Activated CD8-positive, alpha-beta T cell treated with anti-CD3 and anti-CD28 coated beads for 36 hours (primary cell): ENCODE measurements at regions of chr20 and their contacts with region 1.

Region 1: GRCh38 chr20:39049684-39050554 is 87.8 kb downstream of the DHX35 start:
- DNase-seq: peak; percentile 74
- ATAC-seq: peak; percentile 86
- H3K4me3 Mint-ChIP-seq: peak overlapping the region; percentile 79
- H3K27ac Mint-ChIP-seq: peak overlapping the region; percentile 68
- H3K4me1 Mint-ChIP-seq: peaks cover 6% of the 10 kb centered on the region
- H3K27me3 Mint-ChIP-seq: no peaks in the 10 kb centered on the region
- CTCF ChIP-seq: peak; percentile 98

Region 2: DNA sequence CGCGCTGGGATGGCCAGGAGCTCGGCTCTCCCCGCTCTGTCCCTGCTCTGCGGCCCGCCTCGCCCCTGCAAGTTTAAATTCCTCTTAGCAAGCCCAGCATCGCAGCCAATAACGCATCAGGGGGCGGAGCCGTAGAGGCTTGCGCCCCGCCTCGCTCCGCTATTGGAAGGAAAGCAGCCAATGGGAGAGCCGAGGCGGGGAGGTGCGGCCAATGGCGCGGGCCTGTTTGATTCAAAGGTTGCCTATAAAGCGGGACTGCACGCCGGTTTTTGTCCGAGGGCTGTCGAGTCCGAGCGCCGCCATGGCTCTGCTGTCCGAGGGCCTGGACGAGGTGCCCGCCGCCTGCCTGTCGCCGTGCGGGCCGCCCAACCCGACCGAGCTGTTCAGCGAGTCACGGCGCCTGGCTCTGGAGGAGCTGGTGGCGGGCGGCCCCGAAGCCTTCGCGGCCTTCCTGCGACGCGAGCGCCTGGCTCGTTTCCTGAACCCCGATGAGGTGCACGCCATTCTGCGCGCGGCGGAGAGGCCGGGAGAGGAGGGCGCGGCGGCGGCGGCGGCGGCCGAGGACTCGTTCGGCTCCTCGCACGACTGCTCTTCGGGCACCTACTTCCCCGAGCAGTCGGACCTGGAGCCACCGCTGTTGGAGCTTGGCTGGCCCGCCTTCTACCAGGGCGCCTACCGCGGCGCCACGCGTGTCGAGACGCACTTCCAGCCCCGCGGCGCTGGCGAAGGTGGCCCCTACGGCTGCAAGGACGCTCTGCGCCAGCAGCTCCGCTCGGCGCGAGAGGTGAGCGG is 123.6 kb before region 1 on chr20 and contains the start of gene FAM83D:
- CTCF ChIA-PET with region 1: interaction called, 73 read pairs
- POLR2A ChIA-PET with region 1: interaction called, 16 read pairs
- intact Hi-C with region 1: loop called (anchors 2 kb)
- DNase-seq: peak; percentile 99
- ATAC-seq: peak; percentile 97
- H3K4me3 Mint-ChIP-seq: peak within 1 kb of the TSS; percentile 82
- H3K27ac Mint-ChIP-seq: peak within 1 kb of the TSS; percentile 52
- H3K4me1 Mint-ChIP-seq: peaks cover 22% of the 10 kb centered on the region
- H3K27me3 Mint-ChIP-seq: no peaks in the 10 kb centered on the region
- CTCF ChIP-seq: no peak
- total RNA-seq, gene FAM83D: 12.6 to 13.8 TPM

Region 3: GRCh38 chr20:38979842-38980241 is 70.1 kb before region 1 on chr20:
- CTCF ChIA-PET with region 1: interaction called, 14 read pairs
- POLR2A ChIA-PET with region 1: no interaction called
- intact Hi-C with region 1: no loop called
- DNase-seq: no peak
- ATAC-seq: no peak
- H3K4me3 Mint-ChIP-seq: no peak overlapping the region
- H3K27ac Mint-ChIP-seq: no peak overlapping the region
- H3K4me1 Mint-ChIP-seq: peaks cover 6% of the 10 kb centered on the region
- H3K27me3 Mint-ChIP-seq: no peaks in the 10 kb centered on the region
- CTCF ChIP-seq: no peak

Region 4: GRCh38 chr20:38997622-38998021 is 52.3 kb before region 1 on chr20:
- CTCF ChIA-PET with region 1: interaction called, 24 read pairs
- POLR2A ChIA-PET with region 1: interaction called, 3 read pairs
- intact Hi-C with region 1: no loop called
- DNase-seq: peak; percentile 96
- ATAC-seq: peak; percentile 94
- H3K4me3 Mint-ChIP-seq: peak overlapping the region; percentile 44
- H3K27ac Mint-ChIP-seq: peak overlapping the region; percentile 77
- H3K4me1 Mint-ChIP-seq: peaks cover 35% of the 10 kb centered on the region
- H3K27me3 Mint-ChIP-seq: no peaks in the 10 kb centered on the region
- CTCF ChIP-seq: peak; percentile 49

Region 5: DNA sequence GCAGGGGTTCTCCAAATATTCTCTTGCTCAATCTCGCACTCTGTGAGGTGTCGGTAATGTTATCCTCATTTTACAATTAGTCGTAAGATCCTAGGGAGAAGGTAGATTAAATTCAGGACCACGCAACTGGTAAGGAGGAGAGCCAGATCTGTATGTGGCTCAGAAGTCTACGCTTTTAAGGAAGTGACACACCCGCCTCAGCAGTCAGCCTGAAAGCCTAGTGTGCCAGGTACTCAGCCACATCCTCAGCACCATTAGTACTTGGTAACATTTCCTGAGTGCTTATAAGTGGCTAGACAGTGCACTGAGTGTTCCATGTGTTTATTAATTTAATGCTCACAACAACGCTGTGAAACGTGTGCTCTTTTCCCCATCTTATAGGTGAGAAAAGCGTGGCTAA is 24.0 kb before region 1 on chr20:
- CTCF ChIA-PET with region 1: interaction called, 16 read pairs
- POLR2A ChIA-PET with region 1: no interaction called
- intact Hi-C with region 1: no loop called
- DNase-seq: peak; percentile 52
- ATAC-seq: peak; percentile 77
- H3K4me3 Mint-ChIP-seq: no peak overlapping the region
- H3K27ac Mint-ChIP-seq: peak overlapping the region; percentile 67
- H3K4me1 Mint-ChIP-seq: peaks cover 23% of the 10 kb centered on the region
- H3K27me3 Mint-ChIP-seq: no peaks in the 10 kb centered on the region
- CTCF ChIP-seq: no peak

Region 6: DNA sequence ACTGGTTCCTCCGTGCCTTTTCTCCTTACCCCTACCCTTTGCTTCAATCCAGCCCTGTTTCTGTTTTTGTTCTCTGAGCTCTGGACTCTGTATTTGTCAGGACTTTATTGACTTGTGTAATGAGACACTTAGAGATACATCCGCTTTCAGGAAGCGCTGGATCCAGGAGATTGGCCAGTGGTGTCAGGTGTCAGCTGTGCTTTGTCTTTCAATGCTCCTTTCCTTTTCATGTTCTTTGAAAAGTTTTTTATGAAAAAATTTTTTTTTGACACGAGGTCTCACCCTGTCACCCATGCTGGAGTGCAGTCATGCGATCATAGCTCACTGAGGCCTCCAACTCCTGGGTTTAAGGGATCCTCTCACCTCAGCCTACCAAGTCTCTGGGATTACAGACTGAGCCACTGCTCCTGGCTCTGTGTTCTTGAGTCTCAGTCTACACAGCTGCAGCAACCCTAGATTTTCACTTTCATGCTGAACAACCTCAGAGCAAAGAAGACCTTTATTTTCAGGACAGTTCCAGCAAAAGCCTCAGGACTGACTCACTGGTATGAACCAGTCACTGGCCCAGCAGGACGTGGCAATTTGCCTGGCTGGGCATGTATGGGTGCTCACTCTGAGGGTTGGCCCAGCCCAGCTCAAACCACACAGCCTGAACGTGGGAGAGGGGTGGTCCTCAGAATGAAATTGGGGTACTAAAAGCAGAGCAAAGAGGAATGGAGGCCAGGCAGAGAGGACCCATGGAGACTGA is 20.7 kb after region 1 on chr20:
- CTCF ChIA-PET with region 1: interaction called, 65 read pairs
- POLR2A ChIA-PET with region 1: no interaction called
- intact Hi-C with region 1: no loop called
- DNase-seq: no peak
- ATAC-seq: peak; percentile 45
- H3K4me3 Mint-ChIP-seq: no peak overlapping the region
- H3K27ac Mint-ChIP-seq: no peak overlapping the region
- H3K4me1 Mint-ChIP-seq: no peaks in the 10 kb centered on the region
- H3K27me3 Mint-ChIP-seq: peaks cover 11% of the 10 kb centered on the region
- CTCF ChIP-seq: no peak